GM10248 (cell line): ENCODE measurements at regions of chr15 and their contacts with region 1.

Region 1: GRCh38 chr15:94119923-94120775 is 111.2 kb upstream of the MCTP2 start:
- DNase-seq: peak; percentile 53
- CTCF ChIP-seq: peak; percentile 86

Region 2: DNA sequence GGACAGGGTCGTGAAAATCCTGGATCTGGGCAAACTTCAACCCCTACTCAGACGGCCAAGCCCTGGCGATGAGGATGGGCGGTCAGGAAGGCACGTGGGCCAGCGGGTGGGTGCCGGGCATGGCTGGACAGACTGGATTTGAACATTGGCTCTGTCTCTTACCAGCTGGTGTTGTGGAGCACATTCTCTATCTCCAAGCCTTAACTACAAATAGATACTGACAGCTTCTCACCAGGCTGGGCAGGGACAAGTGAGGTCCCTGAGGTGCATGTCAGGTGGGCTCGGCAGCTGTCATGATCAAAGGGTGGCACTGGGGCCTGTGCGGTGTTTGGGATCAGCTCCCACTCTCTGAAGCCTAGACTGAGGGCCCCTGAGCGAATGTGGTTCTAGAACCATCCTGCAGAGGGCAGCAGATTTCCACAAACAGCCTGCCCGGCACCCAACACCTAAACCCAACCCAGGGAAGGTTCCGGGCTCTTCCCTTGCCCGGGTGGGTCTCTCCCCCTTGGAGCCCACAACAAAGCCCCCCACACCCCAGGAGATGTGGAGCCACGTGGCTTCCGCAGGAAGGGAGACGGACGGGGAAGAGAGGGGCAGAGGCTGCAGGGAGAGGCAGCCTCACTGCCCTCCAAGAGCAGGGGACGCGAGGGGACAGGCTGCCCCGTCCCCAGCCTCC is 1089.6 kb before region 1 on chr15:
- CTCF ChIA-PET with region 1: interaction called, 51 read pairs
- POLR2A ChIA-PET with region 1: no interaction called
- DNase-seq: peak; percentile 87
- CTCF ChIP-seq: peak; percentile 81

Region 3: GRCh38 chr15:93035953-93036800 is 1084.0 kb before region 1 on chr15:
- CTCF ChIA-PET with region 1: interaction called, 51 read pairs
- POLR2A ChIA-PET with region 1: no interaction called
- DNase-seq: peak; percentile 78
- CTCF ChIP-seq: peak; percentile 52

Region 4: DNA sequence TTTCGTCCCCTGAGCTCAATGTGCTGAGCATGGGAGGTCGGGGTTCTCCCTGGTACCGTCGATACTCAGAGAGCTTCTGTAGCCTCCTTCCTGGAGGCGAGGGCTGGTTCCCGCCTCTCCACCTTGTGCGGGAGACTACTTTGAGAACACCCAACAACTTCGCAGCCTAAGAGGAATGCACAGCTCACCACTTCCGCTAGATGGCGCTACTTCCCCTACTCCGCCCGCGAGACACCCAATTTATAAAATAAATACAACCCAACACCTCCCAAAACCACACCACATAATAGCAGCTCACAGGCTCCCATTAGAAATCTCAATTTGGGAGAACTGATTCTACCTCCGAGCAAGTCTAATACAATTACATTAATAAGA is 1032.3 kb before region 1 on chr15:
- CTCF ChIA-PET with region 1: interaction called, 27 read pairs
- POLR2A ChIA-PET with region 1: no interaction called
- DNase-seq: peak; percentile 79
- CTCF ChIP-seq: peak; percentile 83

Region 5: GRCh38 chr15:93942269-93942694 is 177.9 kb before region 1 on chr15:
- CTCF ChIA-PET with region 1: no interaction called
- POLR2A ChIA-PET with region 1: no interaction called
- DNase-seq: no peak
- CTCF ChIP-seq: no peak

Region 6: GRCh38 chr15:93982226-93982727 is 137.9 kb before region 1 on chr15:
- CTCF ChIA-PET with region 1: no interaction called
- POLR2A ChIA-PET with region 1: no interaction called
- DNase-seq: no peak
- CTCF ChIP-seq: no peak

Region 7: DNA sequence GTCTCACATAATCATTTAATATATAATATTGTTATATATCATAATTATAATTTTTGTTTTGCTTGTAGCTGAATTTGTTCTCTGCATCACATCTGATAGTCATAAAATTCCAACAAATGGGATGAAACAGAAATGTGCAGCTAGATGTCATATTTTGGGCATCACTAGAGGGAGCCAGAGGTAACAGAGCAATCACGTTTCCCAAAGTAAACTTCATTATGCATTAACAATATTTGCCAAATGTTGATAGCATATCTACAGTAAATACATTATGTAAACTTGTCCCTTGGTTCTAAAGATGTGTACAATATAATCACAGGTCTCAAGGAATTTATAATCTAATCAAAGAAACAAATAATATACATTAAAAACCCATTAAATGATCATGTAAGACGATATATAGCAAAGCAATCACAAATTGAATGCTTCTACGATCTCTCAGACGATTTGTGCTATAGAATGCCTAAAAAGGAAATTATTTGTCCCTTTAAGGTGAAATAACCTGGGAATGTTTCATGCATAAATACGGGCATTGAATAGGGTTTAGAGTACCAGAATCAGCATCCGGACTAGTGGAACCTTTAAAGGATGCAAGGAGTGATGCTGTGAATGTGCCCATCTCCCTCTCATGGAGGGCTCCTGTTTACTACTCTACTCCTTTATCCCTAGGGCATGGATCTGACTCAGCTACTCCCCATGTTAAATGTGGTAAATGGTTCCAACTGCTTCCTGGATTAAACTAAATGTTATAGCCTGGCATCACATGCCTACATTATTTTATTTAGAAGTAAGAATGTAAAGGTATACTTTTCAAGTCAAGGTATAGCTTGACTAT is 122.8 kb before region 1 on chr15:
- CTCF ChIA-PET with region 1: no interaction called
- POLR2A ChIA-PET with region 1: no interaction called
- DNase-seq: no peak
- CTCF ChIP-seq: peak; percentile 38

Region 8: GRCh38 chr15:94105760-94106159 is 14.4 kb before region 1 on chr15:
- CTCF ChIA-PET with region 1: interaction called, 18 read pairs
- POLR2A ChIA-PET with region 1: no interaction called
- DNase-seq: no peak
- CTCF ChIP-seq: no peak

Region 9: DNA sequence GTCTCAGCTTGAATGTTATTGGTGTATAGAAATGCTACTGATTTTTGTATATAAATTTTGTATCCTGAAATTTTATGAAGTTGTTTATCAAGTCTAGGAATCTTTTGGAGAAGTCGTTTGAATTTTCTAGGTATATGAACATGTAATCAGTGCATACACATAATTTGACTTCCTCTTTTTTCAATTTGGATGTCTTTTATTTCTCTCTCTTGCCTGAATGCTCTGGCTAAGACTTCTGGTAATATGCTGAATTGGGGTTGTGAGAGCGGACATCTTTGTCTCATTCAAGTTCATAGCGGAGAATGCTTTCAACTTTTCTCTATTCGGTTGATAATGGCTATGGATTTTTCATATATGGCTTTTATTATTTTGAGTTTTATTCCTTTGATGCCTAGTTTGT is 10.4 kb after region 1 on chr15:
- CTCF ChIA-PET with region 1: interaction called, 10 read pairs
- POLR2A ChIA-PET with region 1: no interaction called
- DNase-seq: no peak
- CTCF ChIP-seq: no peak